ENCODE measurements at regions of chr22 and their contacts with region 1.

Region 1: GRCh38 chr22:40177738-40178416 is at the start of gene TNRC6B:
- DNase-seq: peak; percentile 88
- ATAC-seq: peak; percentile 96 to 97
- H3K4me3 ChIP-seq: peak within 1 kb of the TSS; percentile 62 to 86 (median 75)
- H3K27ac ChIP-seq: peak within 1 kb of the TSS; percentile 77 to 91 (median 88)
- H3K4me1 ChIP-seq: peaks cover 63 to 71% of the 10 kb centered on the region in 2 donors
- H3K27me3 ChIP-seq: no peaks in the 10 kb centered on the region
- CTCF ChIP-seq: peak in 3 of 5 experiments; percentile 7 to 15 (median 14)
- POLR2A ChIP-seq: peak; percentile 96 to 98
- total RNA-seq, gene TNRC6B: 31.9 to 76.7 (median 57.0) TPM

Region 2: GRCh38 chr22:40156001-40156516 is 21.8 kb before region 1 on chr22:
- in situ Hi-C with region 1: no loop called
- intact Hi-C with region 1: loop called (anchors 2 kb)
- DNase-seq: peak; percentile 71 to 82
- ATAC-seq: peak; percentile 99 to 100
- H3K4me3 ChIP-seq: peak overlapping the region in 1 of 4 donors; percentile 14
- H3K27ac ChIP-seq: peak overlapping the region; percentile 61 to 81 (median 69)
- H3K4me1 ChIP-seq: peaks cover 15 to 17% of the 10 kb centered on the region in 2 donors
- H3K27me3 ChIP-seq: no peaks in the 10 kb centered on the region
- CTCF ChIP-seq: peak in 1 of 5 experiments; percentile 21
- POLR2A ChIP-seq: no peak